ENCODE measurements at regions of chr15 and their contacts with region 1.

Region 1: DNA sequence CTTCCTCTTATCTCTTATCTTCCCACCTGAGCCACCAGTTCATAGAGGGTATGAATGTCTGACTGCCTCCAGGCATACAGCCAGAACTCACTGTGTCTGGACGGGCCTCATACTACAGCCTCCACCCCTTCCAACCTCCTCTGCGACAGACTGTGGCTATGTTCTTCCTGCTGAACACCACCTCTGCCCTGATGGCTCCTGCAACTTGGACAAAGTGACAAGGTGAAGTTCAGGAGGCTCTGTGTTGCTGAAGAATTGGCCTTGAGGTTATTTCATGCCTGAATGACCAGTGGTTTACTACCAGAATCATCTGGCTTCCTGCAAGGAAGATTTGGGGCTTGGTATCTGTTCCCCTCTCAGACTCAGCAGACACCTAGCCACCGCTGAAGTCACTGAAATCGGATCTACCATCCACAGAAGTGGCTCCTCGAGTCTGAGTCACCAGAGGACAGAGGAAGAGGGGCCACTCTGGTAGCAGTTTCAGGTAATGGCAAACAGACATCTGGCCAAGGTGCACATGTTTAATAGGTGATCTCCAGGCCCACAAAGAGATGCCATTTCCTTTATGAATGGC is 14.2 kb upstream of the ULK3 start:
- DNase-seq: no peak
- ATAC-seq: peak; percentile 72
- H3K4me3 Mint-ChIP-seq: peak overlapping the region; percentile 44
- H3K27ac Mint-ChIP-seq: peak overlapping the region; percentile 83
- H3K4me1 Mint-ChIP-seq: peaks cover 52% of the 10 kb centered on the region
- H3K27me3 Mint-ChIP-seq: no peaks in the 10 kb centered on the region
- CTCF ChIP-seq: no peak

Region 2: DNA sequence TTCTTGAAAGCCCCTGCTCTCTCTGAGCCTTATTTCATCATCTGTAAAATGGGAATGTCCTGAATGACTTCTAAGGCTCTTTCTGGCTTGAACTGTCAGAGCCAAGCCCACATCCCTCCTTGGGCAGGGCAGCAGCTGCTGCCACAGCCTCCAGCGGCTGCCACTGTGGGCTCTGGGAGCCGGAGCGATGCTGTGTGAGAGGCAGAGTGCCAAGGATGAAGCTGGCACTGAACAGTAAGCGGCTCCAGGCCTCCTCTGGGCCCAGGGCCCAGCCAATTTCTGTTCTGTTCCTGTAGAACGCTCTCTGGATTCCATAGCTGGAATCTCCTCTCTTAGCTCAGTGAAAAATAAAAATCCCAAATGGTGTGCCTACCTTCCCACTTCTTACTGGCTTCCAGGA is 26.3 kb before region 1 on chr15:
- CTCF ChIA-PET with region 1: no interaction called
- POLR2A ChIA-PET with region 1: no interaction called
- intact Hi-C with region 1: no loop called
- DNase-seq: no peak
- ATAC-seq: no peak
- H3K4me3 Mint-ChIP-seq: no peak overlapping the region
- H3K27ac Mint-ChIP-seq: no peak overlapping the region
- H3K4me1 Mint-ChIP-seq: peaks cover 11% of the 10 kb centered on the region
- H3K27me3 Mint-ChIP-seq: peaks cover 21% of the 10 kb centered on the region
- CTCF ChIP-seq: no peak

Region 3: GRCh38 chr15:74889883-74890664 is 32.9 kb after region 1 on chr15 and contains the start of gene MPI:
- CTCF ChIA-PET with region 1: no interaction called
- POLR2A ChIA-PET with region 1: interaction called, 12 read pairs
- intact Hi-C with region 1: no loop called
- DNase-seq: peak; percentile 79
- ATAC-seq: peak; percentile 99
- H3K4me3 Mint-ChIP-seq: peak within 1 kb of the TSS; percentile 96
- H3K27ac Mint-ChIP-seq: peak within 1 kb of the TSS; percentile 89
- H3K4me1 Mint-ChIP-seq: peaks cover 45% of the 10 kb centered on the region
- H3K27me3 Mint-ChIP-seq: no peaks in the 10 kb centered on the region
- CTCF ChIP-seq: no peak
- total RNA-seq, gene MPI: 33.1 and 40.2 TPM in 2 replicates